Mammary epithelial cell (primary cell): ENCODE measurements at regions of chr5 and their contacts with region 1.

Region 1: GRCh38 chr5:61055434-61056006 is 106.7 kb downstream of the SMIM15 start:
- DNase-seq: peak; percentile 40
- H3K4me3 ChIP-seq: no peak overlapping the region
- H3K27ac ChIP-seq: no peak overlapping the region
- H3K4me1 ChIP-seq: peaks cover 34% of the 10 kb centered on the region
- H3K27me3 ChIP-seq: no peaks in the 10 kb centered on the region
- CTCF ChIP-seq: peak; percentile 73 to 85

Region 2: DNA sequence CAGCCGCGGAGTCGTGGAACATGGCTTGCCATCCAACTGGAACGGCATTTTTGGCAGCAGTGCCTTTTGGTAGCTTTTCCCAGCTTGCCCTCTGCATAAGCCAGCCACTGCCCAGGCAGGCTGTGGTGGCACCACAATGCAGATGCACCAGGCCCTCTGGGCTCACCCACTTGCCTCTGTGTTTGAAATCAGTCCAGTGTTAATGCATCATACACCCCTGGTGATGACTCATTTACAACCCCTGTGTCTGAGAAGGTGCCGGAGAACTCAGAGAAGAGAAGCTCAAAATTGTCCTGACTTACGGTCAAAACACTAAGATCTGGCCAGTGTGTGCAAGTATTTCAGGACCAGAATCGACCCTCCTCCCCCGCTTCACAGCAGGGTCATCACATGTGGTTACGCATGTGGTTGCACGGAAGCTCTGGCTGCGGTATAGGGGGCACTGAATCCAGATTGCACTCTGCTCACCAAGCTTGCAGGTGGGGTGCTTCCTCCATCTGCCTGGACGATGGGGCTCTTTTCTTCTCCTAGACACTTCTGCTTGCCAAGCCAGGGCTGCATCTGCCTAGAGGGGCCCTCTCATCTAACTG is 173.3 kb after region 1 on chr5:
- CTCF ChIA-PET with region 1: no interaction called
- dilution Hi-C with region 1: no loop called
- in situ Hi-C with region 1: no loop called
- intact Hi-C with region 1: no loop called
- DNase-seq: peak; percentile 71
- H3K4me3 ChIP-seq: no peak overlapping the region
- H3K27ac ChIP-seq: no peak overlapping the region
- H3K4me1 ChIP-seq: peaks cover 15% of the 10 kb centered on the region
- H3K27me3 ChIP-seq: no peaks in the 10 kb centered on the region
- CTCF ChIP-seq: no peak

Region 3: GRCh38 chr5:61408476-61409168 is 353.1 kb after region 1 on chr5:
- CTCF ChIA-PET with region 1: no interaction called
- dilution Hi-C with region 1: no loop called
- in situ Hi-C with region 1: no loop called
- intact Hi-C with region 1: loop called (anchors 10 kb)
- DNase-seq: peak; percentile 100
- H3K4me3 ChIP-seq: peak overlapping the region; percentile 2 to 54 (median 35)
- H3K27ac ChIP-seq: peak overlapping the region; percentile 100
- H3K4me1 ChIP-seq: peaks cover 21% of the 10 kb centered on the region
- H3K27me3 ChIP-seq: no peaks in the 10 kb centered on the region
- CTCF ChIP-seq: no peak